ENCODE measurements at regions of chr9 and their contacts with region 1.

Region 1: DNA sequence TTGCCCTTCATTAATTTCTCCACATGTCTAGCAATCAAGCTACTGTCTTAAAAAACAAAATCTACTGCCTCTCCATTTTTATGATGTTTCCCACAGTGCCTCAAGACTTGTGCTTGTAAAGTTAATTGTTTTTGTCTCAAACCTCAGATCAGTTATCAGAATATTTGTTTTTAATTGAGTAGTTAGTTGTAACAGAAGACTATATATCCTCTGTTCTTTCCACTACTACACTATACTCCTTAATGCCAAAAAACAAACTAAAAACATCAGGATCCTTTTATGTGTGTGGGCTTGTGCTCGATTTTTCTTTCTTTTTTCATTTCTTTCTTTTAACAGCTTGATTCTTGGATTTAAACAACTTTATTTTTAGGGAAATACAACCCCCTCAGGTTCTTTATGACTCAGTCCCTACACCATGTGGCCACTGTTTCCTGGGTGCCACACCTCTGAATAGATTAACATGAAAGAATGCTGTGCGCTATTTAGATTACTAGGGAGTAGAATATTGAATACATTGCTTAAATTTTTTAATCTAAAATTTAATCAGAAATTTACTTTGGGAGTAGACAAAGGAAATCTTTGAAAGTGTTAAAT is 1.2 kb downstream of the ASPN start:
- DNase-seq: peak; percentile 38
- CTCF ChIP-seq: no peak

Region 2: GRCh38 chr9:92790542-92791527 is 309.7 kb after region 1 on chr9:
- in situ Hi-C with region 1: loop called (anchors 25 kb)
- DNase-seq: peak; percentile 78
- CTCF ChIP-seq: peak; percentile 53